Heart left ventricle (tissue), 16 donors: ENCODE measurements at regions of chr1 and their contacts with region 1.

Region 1: GRCh38 chr1:87464022-87464490 is 135.4 kb downstream of the LMO4 start:
- DNase-seq: no peak
- ATAC-seq: peak in 3 of 4 donors; percentile 71 to 90 (median 85)
- H3K4me3 ChIP-seq: no peak overlapping the region
- H3K27ac ChIP-seq: no peak overlapping the region
- H3K4me1 ChIP-seq: peaks cover 0 to 6% (median 0%) of the 10 kb centered on the region in 12 donors
- H3K27me3 ChIP-seq: no peaks in the 10 kb centered on the region
- CTCF ChIP-seq: no peak
- POLR2A ChIP-seq: no peak

Region 2: GRCh38 chr1:87362834-87363426 is 101.1 kb before region 1 on chr1:
- intact Hi-C with region 1: loop called in 1 of 10 experiments (anchors 10 kb)
- DNase-seq: no peak
- ATAC-seq: no peak
- H3K4me3 ChIP-seq: no peak overlapping the region
- H3K27ac ChIP-seq: no peak overlapping the region
- H3K4me1 ChIP-seq: peaks cover 0 to 9% (median 0%) of the 10 kb centered on the region in 12 donors
- H3K27me3 ChIP-seq: no peaks in the 10 kb centered on the region
- CTCF ChIP-seq: no peak
- POLR2A ChIP-seq: no peak